A673 (cell line): ENCODE measurements at regions of chr6 and their contacts with region 1.

Region 1: DNA sequence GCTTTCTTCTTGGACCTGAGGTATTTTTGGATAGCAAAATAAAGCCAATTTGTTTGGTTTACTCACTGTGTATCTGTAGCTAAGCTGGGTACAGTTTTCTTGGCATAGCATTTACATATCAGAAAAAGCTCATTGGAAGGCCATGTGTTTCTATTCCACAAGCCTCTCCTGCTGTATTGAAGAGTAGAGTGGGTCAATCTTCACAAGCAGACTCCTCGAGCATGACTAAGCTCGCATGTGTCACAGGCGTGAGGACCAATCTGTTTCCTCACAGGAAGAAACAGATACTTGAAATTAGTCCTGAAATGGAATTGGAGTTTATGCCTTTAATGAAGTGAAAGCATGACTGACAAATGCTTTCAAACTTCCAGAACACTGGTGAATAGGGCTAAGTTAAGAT is 1279.0 kb upstream of the MAP3K7 start:
- DNase-seq: no peak
- H3K4me3 ChIP-seq: no peak overlapping the region
- H3K27ac ChIP-seq: no peak overlapping the region
- H3K4me1 ChIP-seq: no peaks in the 10 kb centered on the region
- H3K27me3 ChIP-seq: no peaks in the 10 kb centered on the region
- CTCF ChIP-seq: no peak

Region 2: DNA sequence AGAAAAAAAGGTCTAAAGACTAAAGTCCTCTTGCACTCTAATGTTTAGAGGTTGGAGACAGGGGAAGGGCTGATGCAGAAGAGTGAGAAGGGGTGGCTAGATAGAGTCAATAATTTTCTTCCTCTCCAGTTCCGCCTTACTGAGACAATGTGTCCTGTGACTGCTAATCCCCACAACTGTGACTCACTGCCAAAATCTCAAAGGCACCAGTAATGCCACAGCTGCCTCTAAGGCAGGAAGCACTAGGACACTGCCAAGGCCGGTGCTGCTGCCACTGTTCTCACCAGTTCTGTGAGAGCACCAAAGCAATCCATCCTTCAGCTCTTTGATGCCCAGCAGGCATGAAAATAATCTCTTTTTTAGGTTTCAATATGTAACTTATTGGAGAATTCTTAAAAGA is 577.1 kb before region 1 on chr6:
- CTCF ChIA-PET with region 1: no interaction called
- POLR2A ChIA-PET with region 1: no interaction called
- intact Hi-C with region 1: no loop called
- DNase-seq: peak; percentile 61
- H3K4me3 ChIP-seq: no peak overlapping the region
- H3K27ac ChIP-seq: no peak overlapping the region
- H3K4me1 ChIP-seq: no peaks in the 10 kb centered on the region
- H3K27me3 ChIP-seq: no peaks in the 10 kb centered on the region
- CTCF ChIP-seq: no peak

Region 3: DNA sequence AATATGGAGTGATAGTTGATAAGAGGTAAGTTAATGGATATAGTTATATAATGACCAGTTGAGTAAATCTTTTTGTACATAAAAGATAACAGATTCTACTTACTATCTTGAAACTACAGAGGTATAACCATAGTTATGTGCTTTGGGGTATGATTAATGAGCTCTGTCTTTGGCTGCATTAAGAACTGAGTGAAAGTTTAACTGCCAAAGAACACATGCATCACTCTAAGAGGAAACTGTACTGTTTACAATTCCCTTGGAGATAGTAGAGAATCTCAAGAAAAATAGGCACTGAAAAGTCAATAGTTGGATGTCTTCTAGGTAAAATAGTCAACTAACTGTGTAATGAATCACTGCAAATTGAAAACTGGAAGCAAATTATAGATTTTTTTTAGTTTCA is 423.9 kb after region 1 on chr6:
- CTCF ChIA-PET with region 1: no interaction called
- POLR2A ChIA-PET with region 1: interaction called, 12 read pairs
- intact Hi-C with region 1: no loop called
- DNase-seq: no peak
- H3K4me3 ChIP-seq: no peak overlapping the region
- H3K27ac ChIP-seq: no peak overlapping the region
- H3K4me1 ChIP-seq: no peaks in the 10 kb centered on the region
- H3K27me3 ChIP-seq: no peaks in the 10 kb centered on the region
- CTCF ChIP-seq: no peak